Activated T-helper 1 cell treated with anti-CD3 and anti-CD28 coated beads, Interleukin-12 subunit alpha, Interleukin-12 subunit beta, Interleukin-2, Interleukin-4 antibody, amounts not matched to agents 30 ng/mL and 10 ng/mL and 1 ng/mL, durations not matched to agents 14 hours and 24 hours and 36 hours (primary cell): ENCODE measurements at regions of chr10 and their contacts with region 1.

Region 1: GRCh38 chr10:132307823-132308587 is at the start of gene STK32C:
- DNase-seq: peak; percentile 80
- H3K4me3 Mint-ChIP-seq: peak within 1 kb of the TSS; percentile 87
- H3K27ac Mint-ChIP-seq: peak within 1 kb of the TSS; percentile 89
- H3K4me1 Mint-ChIP-seq: no peaks in the 10 kb centered on the region
- H3K27me3 Mint-ChIP-seq: peaks cover 39% of the 10 kb centered on the region
- total RNA-seq, gene STK32C: 14.6 and 15.5 TPM in 2 replicates

Region 2: DNA sequence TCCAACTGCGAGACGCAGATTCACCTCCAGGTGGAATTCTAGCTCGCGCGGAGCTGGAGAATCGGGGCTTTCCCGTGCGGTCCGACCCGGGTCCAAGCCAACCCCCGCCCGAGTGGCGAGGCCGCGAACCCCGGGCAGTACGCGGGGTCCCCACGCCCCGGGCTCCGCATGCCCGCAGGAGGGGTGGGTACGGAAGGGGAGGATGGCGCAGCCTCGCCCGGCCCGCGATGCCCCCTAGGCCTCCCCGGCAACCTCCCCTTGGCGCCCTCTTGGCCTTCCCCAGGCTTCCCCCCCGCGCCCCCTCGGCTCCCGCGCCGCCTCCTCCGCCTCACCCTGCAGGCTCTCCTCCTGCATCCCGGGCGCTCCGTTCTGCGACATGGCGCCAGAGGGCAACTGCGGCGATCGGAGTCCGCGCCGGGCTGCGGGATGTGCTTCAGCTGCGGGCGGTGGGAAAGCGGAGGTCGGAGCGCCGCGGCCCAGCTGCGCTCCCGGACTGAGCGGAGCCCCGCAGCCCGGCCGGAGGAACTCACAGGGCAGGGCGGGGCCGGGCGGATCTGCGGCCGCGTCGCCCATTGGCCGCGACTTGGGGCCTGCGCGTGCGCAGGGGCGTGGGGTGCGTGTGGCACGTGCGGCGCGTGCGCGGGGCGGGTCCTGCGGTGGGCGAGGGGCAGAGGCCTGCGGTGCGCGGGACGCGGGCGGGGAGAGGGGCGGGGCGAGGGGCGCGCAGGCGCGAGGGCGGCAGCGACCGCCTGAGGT is 326.4 kb before region 1 on chr10 and contains the start of gene BNIP3:
- intact Hi-C with region 1: loop called (anchors 10 kb)
- DNase-seq: peak; percentile 90
- H3K4me3 Mint-ChIP-seq: peak within 1 kb of the TSS; percentile 88
- H3K27ac Mint-ChIP-seq: peak within 1 kb of the TSS; percentile 48
- H3K4me1 Mint-ChIP-seq: peaks cover 36% of the 10 kb centered on the region
- H3K27me3 Mint-ChIP-seq: peaks cover 25% of the 10 kb centered on the region
- total RNA-seq, gene BNIP3: 43.0 and 48.9 TPM in 2 replicates

Region 3: GRCh38 chr10:132185601-132186487 is 122.2 kb before region 1 on chr10:
- intact Hi-C with region 1: loop called (anchors 1 kb)
- DNase-seq: peak; percentile 68
- H3K4me3 Mint-ChIP-seq: peak overlapping the region; percentile 71
- H3K27ac Mint-ChIP-seq: no peak overlapping the region
- H3K4me1 Mint-ChIP-seq: no peaks in the 10 kb centered on the region
- H3K27me3 Mint-ChIP-seq: peaks cover 31% of the 10 kb centered on the region

Region 4: GRCh38 chr10:132331526-132332432 is 23.8 kb after region 1 on chr10 and contains the start of gene LRRC27:
- intact Hi-C with region 1: loop called (anchors 1 kb)
- DNase-seq: peak; percentile 100
- H3K4me3 Mint-ChIP-seq: peak within 1 kb of the TSS; percentile 91
- H3K27ac Mint-ChIP-seq: peak within 1 kb of the TSS; percentile 96
- H3K4me1 Mint-ChIP-seq: peaks cover 58% of the 10 kb centered on the region
- H3K27me3 Mint-ChIP-seq: peaks cover 3% of the 10 kb centered on the region
- total RNA-seq, gene LRRC27: 1.7 and 3.4 TPM in 2 replicates

Region 5: GRCh38 chr10:132452631-132453469 is 144.8 kb after region 1 on chr10:
- intact Hi-C with region 1: loop called (anchors 1 kb)
- DNase-seq: peak; percentile 85
- H3K4me3 Mint-ChIP-seq: no peak overlapping the region
- H3K27ac Mint-ChIP-seq: peak overlapping the region; percentile 58
- H3K4me1 Mint-ChIP-seq: peaks cover 4% of the 10 kb centered on the region
- H3K27me3 Mint-ChIP-seq: no peaks in the 10 kb centered on the region